Naive thymus-derived CD4-positive, alpha-beta T cell (primary cell): ENCODE measurements at regions of chr11 and their contacts with region 1.

Region 1: GRCh38 chr11:10455637-10456487 is 798 bp downstream of the AMPD3 start:
- DNase-seq: peak; percentile 45 to 85 (median 77)
- ATAC-seq: peak; percentile 71
- H3K4me3 ChIP-seq: peak overlapping the region; percentile 55
- H3K4me3 Mint-ChIP-seq: peak overlapping the region; percentile 78 to 96 (median 92)
- H3K27ac ChIP-seq: peak overlapping the region; percentile 75
- H3K27ac Mint-ChIP-seq: peak overlapping the region; percentile 87 to 98 (median 94)
- H3K4me1 ChIP-seq: peaks cover 62 to 67% of the 10 kb centered on the region in 2 donors
- H3K4me1 Mint-ChIP-seq: peaks cover 72 to 92% (median 90%) of the 10 kb centered on the region in 7 donors
- H3K27me3 ChIP-seq: no peaks in the 10 kb centered on the region
- H3K27me3 Mint-ChIP-seq: peaks cover 0 to 9% (median 0%) of the 10 kb centered on the region in 5 donors

Region 2: GRCh38 chr11:8964324-8965320 is 1491.2 kb before region 1 on chr11 and contains the start of gene TMEM9B:
- CTCF ChIA-PET with region 1: no interaction called
- POLR2A ChIA-PET with region 1: no interaction called
- intact Hi-C with region 1: loop called in 1 of 2 experiments (anchors 5 kb)
- DNase-seq: peak; percentile 35 to 85 (median 66)
- ATAC-seq: peak; percentile 90
- H3K4me3 ChIP-seq: peak within 1 kb of the TSS; percentile 96
- H3K4me3 Mint-ChIP-seq: peak within 1 kb of the TSS; percentile 94 to 99 (median 98)
- H3K27ac ChIP-seq: peak within 1 kb of the TSS; percentile 92
- H3K27ac Mint-ChIP-seq: peak within 1 kb of the TSS; percentile 94 to 99 (median 98)
- H3K4me1 ChIP-seq: peaks cover 13 to 17% of the 10 kb centered on the region in 2 donors
- H3K4me1 Mint-ChIP-seq: peaks cover 17 to 45% (median 32%) of the 10 kb centered on the region in 7 donors
- H3K27me3 ChIP-seq: no peaks in the 10 kb centered on the region
- H3K27me3 Mint-ChIP-seq: no peaks in the 10 kb centered on the region
- total RNA-seq, gene TMEM9B: 16.2 to 33.6 (median 30.6) TPM

Region 3: DNA sequence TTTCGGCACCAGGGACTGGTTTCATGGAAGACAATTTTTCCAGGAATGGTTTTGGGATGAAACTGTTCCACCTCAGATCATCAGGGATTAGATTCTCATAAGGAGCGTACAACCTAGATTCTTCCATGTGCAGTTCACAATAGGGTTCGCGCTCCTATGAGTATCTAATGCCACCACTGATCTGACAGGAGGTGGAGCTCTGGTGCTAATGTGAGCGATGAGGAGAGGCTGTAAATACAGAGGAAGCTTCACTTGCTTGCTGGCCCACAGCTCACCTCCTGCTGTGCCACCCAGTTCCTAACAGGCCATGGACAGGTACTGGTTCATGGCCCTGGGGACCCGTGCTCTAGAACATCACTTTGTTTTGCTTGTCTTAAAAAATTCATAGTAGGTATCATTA is 42.6 kb before region 1 on chr11:
- CTCF ChIA-PET with region 1: interaction called, 8 read pairs
- POLR2A ChIA-PET with region 1: interaction called, 8 read pairs
- intact Hi-C with region 1: loop called (anchors 1 kb)
- DNase-seq: peak in 7 of 9 donors; percentile 35 to 65 (median 57)
- ATAC-seq: peak; percentile 81
- H3K4me3 ChIP-seq: no peak overlapping the region
- H3K4me3 Mint-ChIP-seq: no peak overlapping the region
- H3K27ac ChIP-seq: no peak overlapping the region
- H3K27ac Mint-ChIP-seq: no peak overlapping the region
- H3K4me1 ChIP-seq: peaks cover 12 to 27% of the 10 kb centered on the region in 2 donors
- H3K4me1 Mint-ChIP-seq: peaks cover 29 to 47% (median 39%) of the 10 kb centered on the region in 7 donors
- H3K27me3 ChIP-seq: no peaks in the 10 kb centered on the region
- H3K27me3 Mint-ChIP-seq: peaks cover 0 to 16% (median 0%) of the 10 kb centered on the region in 5 donors

Region 4: GRCh38 chr11:10490398-10491241 is 34.8 kb after region 1 on chr11:
- CTCF ChIA-PET with region 1: no interaction called
- POLR2A ChIA-PET with region 1: no interaction called
- intact Hi-C with region 1: loop called in 1 of 2 experiments (anchors 5 kb)
- DNase-seq: no peak
- ATAC-seq: no peak
- H3K4me3 ChIP-seq: no peak overlapping the region
- H3K4me3 Mint-ChIP-seq: no peak overlapping the region
- H3K27ac ChIP-seq: no peak overlapping the region
- H3K27ac Mint-ChIP-seq: peak overlapping the region in 5 of 9 donors; percentile 7 to 72 (median 59)
- H3K4me1 ChIP-seq: no peaks in the 10 kb centered on the region
- H3K4me1 Mint-ChIP-seq: peaks cover 4 to 22% (median 8%) of the 10 kb centered on the region in 7 donors
- H3K27me3 ChIP-seq: no peaks in the 10 kb centered on the region
- H3K27me3 Mint-ChIP-seq: no peaks in the 10 kb centered on the region

Region 5: GRCh38 chr11:10750838-10751580 is 295.1 kb after region 1 on chr11 and contains the start of gene CTR9:
- CTCF ChIA-PET with region 1: no interaction called
- POLR2A ChIA-PET with region 1: interaction called, 3 read pairs
- intact Hi-C with region 1: loop called in 1 of 2 experiments (anchors 2 kb)
- DNase-seq: peak; percentile 78 to 94 (median 88)
- ATAC-seq: peak; percentile 96
- H3K4me3 ChIP-seq: peak within 1 kb of the TSS; percentile 79
- H3K4me3 Mint-ChIP-seq: peak within 1 kb of the TSS; percentile 95 to 99 (median 97)
- H3K27ac ChIP-seq: peak within 1 kb of the TSS; percentile 85
- H3K27ac Mint-ChIP-seq: peak within 1 kb of the TSS; percentile 90 to 96 (median 91)
- H3K4me1 ChIP-seq: peaks cover 7 to 8% of the 10 kb centered on the region in 2 donors
- H3K4me1 Mint-ChIP-seq: peaks cover 12 to 36% (median 31%) of the 10 kb centered on the region in 7 donors
- H3K27me3 ChIP-seq: no peaks in the 10 kb centered on the region
- H3K27me3 Mint-ChIP-seq: no peaks in the 10 kb centered on the region
- total RNA-seq, gene CTR9: 23.8 to 64.0 (median 47.8) TPM